Endothelial cell of umbilical vein (primary cell): ENCODE measurements at regions of chr3 and their contacts with region 1.

Region 1: GRCh38 chr3:119676771-119677640 is at the start of gene COX17:
- DNase-seq: peak; percentile 93
- H3K4me3 ChIP-seq: peak within 1 kb of the TSS; percentile 71 to 88 (median 75)
- H3K27ac ChIP-seq: peak within 1 kb of the TSS; percentile 62
- H3K4me1 ChIP-seq: peaks cover 15% of the 10 kb centered on the region
- H3K27me3 ChIP-seq: no peaks in the 10 kb centered on the region
- CTCF ChIP-seq: no peak
- POLR2A ChIP-seq: peak; percentile 21
- total RNA-seq, gene COX17: 31.3 and 37.6 TPM in 2 replicates

Region 2: DNA sequence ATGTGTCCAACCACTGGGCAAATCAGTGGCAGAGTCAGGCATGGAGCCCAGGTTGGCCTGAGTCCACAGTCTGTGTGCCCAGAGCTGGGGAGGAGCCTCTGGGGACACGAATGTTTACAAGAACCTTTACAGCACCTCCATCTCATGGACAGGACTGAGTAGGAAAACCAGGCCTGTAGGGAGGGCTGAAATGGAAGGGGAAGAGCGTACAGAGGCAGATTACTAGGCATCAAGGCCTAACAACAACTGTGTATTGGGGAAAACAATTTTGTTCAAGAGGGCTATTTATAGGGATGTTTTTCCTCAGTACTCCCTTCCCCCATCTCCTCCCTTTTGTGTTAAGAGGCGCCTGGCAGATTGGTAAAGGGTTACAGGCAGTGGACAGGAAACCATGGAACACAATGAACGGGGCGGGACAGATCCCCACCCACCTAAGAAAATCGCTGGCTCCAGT is 397.9 kb before region 1 on chr3:
- CTCF ChIA-PET with region 1: interaction called, 8 read pairs
- POLR2A ChIA-PET with region 1: no interaction called
- dilution Hi-C with region 1: no loop called
- intact Hi-C with region 1: loop called (anchors 2 kb)
- DNase-seq: peak; percentile 93
- H3K4me3 ChIP-seq: no peak overlapping the region
- H3K27ac ChIP-seq: peak overlapping the region; percentile 66
- H3K4me1 ChIP-seq: peaks cover 17% of the 10 kb centered on the region
- H3K27me3 ChIP-seq: no peaks in the 10 kb centered on the region
- CTCF ChIP-seq: no peak
- POLR2A ChIP-seq: peak; percentile 47

Region 3: DNA sequence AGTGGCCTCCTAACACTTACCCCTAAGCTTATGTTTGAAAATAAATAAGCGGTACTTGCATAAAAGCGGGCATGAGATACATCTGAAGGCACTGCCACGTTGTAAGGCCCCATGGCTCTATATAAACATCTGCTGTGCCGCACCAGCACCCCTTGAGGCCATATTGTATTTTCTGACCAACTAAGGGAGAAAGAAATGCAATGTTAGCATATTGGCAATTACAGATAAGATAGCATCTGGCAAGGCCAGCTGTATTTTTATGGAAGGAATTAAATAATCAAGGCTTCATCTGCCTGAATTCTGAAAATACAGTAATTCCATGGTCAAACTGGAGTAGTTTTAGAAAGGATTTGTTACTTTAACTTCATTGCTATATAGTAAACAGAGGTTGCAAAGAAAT is 242.3 kb before region 1 on chr3:
- CTCF ChIA-PET with region 1: no interaction called
- POLR2A ChIA-PET with region 1: no interaction called
- dilution Hi-C with region 1: no loop called
- intact Hi-C with region 1: loop called (anchors 5 kb)
- DNase-seq: no peak
- H3K4me3 ChIP-seq: no peak overlapping the region
- H3K27ac ChIP-seq: no peak overlapping the region
- H3K4me1 ChIP-seq: peaks cover 16% of the 10 kb centered on the region
- H3K27me3 ChIP-seq: no peaks in the 10 kb centered on the region
- CTCF ChIP-seq: no peak
- POLR2A ChIP-seq: no peak

Region 4: GRCh38 chr3:119498186-119498987 is 178.6 kb before region 1 on chr3 and contains the start of gene TIMMDC1:
- CTCF ChIA-PET with region 1: interaction called, 5 read pairs
- POLR2A ChIA-PET with region 1: interaction called, 11 read pairs
- dilution Hi-C with region 1: no loop called
- intact Hi-C with region 1: loop called (anchors 1 kb)
- DNase-seq: peak; percentile 97
- H3K4me3 ChIP-seq: peak within 1 kb of the TSS; percentile 82 to 85 (median 83)
- H3K27ac ChIP-seq: peak within 1 kb of the TSS; percentile 80
- H3K4me1 ChIP-seq: peaks cover 26% of the 10 kb centered on the region
- H3K27me3 ChIP-seq: no peaks in the 10 kb centered on the region
- CTCF ChIP-seq: no peak
- POLR2A ChIP-seq: peak; percentile 86
- total RNA-seq, gene TIMMDC1: 76.2 and 80.8 TPM in 2 replicates

Region 5: DNA sequence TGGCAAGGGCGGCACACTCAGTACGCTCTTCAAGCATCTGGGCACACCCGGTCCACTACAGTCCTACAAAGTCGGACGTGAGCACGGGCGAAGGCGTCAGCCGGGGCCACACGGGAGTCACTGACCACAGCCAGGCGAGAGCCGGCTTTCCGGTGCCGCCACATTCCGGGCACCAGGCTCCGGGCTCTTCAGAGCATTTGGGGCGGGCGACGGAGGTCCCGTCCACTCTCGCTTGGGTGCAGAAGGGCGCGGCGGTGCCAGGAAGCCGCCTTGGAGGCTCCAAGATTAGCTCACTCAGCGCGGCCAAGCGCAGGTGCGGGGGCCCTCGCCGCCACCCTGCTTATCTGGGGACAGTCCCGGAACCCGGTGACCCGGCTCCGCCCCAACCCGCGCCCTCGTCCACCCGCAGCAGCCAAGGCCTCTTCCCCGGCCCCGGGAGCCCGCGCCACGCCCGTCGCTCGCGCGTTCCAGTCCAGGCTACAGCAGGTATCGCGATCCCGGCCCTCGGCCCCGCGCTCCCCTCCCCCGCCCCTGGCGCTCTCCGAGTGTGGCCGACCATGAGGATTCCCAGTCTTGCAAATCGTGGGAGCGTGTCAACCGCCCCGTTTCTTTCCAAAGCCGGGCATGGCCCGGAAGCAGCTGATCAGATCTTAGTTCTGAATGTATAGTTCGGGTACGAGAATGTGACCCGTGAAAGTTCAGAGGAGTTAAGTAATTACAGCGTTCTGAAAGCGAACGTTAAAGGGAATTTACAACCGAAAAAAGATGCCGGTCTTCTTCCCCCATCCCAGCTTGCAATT is 97.4 kb before region 1 on chr3 and contains the start of gene ADPRH:
- CTCF ChIA-PET with region 1: interaction called, 3 read pairs
- POLR2A ChIA-PET with region 1: no interaction called
- dilution Hi-C with region 1: no loop called
- intact Hi-C with region 1: loop called (anchors 2 kb)
- DNase-seq: peak; percentile 78
- H3K4me3 ChIP-seq: peak within 1 kb of the TSS; percentile 65 to 86 (median 66)
- H3K27ac ChIP-seq: peak within 1 kb of the TSS; percentile 71
- H3K4me1 ChIP-seq: peaks cover 9% of the 10 kb centered on the region
- H3K27me3 ChIP-seq: no peaks in the 10 kb centered on the region
- CTCF ChIP-seq: no peak
- POLR2A ChIP-seq: no peak
- total RNA-seq, gene ADPRH: 6.0 and 8.0 TPM in 2 replicates

Region 6: GRCh38 chr3:119637679-119638525 is 39.1 kb before region 1 on chr3:
- CTCF ChIA-PET with region 1: interaction called, 4 read pairs
- POLR2A ChIA-PET with region 1: interaction called, 3 read pairs
- dilution Hi-C with region 1: no loop called
- intact Hi-C with region 1: loop called (anchors 2 kb)
- DNase-seq: peak; percentile 91
- H3K4me3 ChIP-seq: no peak overlapping the region
- H3K27ac ChIP-seq: peak overlapping the region; percentile 80
- H3K4me1 ChIP-seq: peaks cover 34% of the 10 kb centered on the region
- H3K27me3 ChIP-seq: no peaks in the 10 kb centered on the region
- CTCF ChIP-seq: no peak
- POLR2A ChIP-seq: no peak

Region 7: GRCh38 chr3:120331076-120331475 is 654.1 kb after region 1 on chr3:
- CTCF ChIA-PET with region 1: no interaction called
- POLR2A ChIA-PET with region 1: no interaction called
- dilution Hi-C with region 1: no loop called
- intact Hi-C with region 1: no loop called
- DNase-seq: no peak
- H3K4me3 ChIP-seq: no peak overlapping the region
- H3K27ac ChIP-seq: no peak overlapping the region
- H3K4me1 ChIP-seq: no peaks in the 10 kb centered on the region
- H3K27me3 ChIP-seq: no peaks in the 10 kb centered on the region
- CTCF ChIP-seq: no peak
- POLR2A ChIP-seq: no peak